ENCODE measurements at regions of chr10 and their contacts with region 1.

Region 1: DNA sequence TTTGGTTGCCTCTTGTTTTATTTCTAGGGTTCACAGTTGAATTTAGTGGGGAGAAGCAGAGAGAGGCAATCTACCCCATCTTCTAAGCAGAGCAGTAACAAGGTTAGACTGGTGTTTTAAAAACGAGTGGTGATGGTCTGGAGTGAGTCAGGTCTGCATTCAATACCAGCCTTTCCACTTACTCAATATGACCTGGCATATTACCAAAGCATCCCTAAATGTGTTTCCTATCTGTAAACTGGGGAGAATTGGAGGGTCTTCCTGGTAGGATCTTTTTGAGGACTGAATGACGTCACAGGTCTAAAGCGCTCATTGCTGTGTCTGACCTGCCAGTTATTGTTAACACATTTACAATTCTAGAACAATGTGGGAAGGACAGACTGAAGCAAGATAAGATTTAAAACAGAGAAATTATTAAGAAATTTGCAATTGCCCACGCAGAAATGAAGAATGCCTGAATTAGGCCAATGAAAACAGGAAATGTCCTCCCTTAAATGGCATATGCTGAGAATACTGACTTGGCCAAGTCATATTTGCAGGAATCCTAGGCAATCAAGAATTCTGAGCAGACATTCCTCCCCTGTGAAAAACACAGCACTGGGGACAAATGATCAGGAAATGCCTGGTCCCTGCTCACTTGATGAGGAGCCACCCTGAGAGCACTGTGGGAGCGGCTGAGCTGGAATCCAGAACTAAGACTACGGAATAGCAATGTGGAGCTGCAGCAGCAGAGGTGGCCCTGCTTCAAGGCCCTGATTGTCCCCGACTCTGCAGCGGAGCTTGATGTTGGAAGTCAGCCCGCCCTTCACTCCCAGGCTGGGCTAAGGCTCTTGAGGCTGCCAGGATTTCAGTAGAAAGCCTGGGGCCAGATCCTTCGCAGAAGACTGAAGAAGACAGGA is 184.5 kb upstream of the CXCL12 start:
- DNase-seq: peak in 1 of 2 donors; percentile 78
- ATAC-seq: peak; percentile 60
- H3K4me3 ChIP-seq: no peak overlapping the region
- H3K27ac ChIP-seq: peak overlapping the region; percentile 30 to 85
- H3K4me1 ChIP-seq: peaks cover 1 to 5% of the 10 kb centered on the region in 2 donors
- H3K27me3 ChIP-seq: no peaks in the 10 kb centered on the region

Region 2: GRCh38 chr10:44745920-44746319 is 176.5 kb after region 1 on chr10:
- intact Hi-C with region 1: loop called in 1 of 2 experiments (anchors 10 kb)
- DNase-seq: no peak
- ATAC-seq: no peak
- H3K4me3 ChIP-seq: no peak overlapping the region
- H3K27ac ChIP-seq: no peak overlapping the region
- H3K4me1 ChIP-seq: no peaks in the 10 kb centered on the region
- H3K27me3 ChIP-seq: no peaks in the 10 kb centered on the region